A549 (cell line): ENCODE measurements at regions of chr15 and their contacts with region 1.

Region 1: DNA sequence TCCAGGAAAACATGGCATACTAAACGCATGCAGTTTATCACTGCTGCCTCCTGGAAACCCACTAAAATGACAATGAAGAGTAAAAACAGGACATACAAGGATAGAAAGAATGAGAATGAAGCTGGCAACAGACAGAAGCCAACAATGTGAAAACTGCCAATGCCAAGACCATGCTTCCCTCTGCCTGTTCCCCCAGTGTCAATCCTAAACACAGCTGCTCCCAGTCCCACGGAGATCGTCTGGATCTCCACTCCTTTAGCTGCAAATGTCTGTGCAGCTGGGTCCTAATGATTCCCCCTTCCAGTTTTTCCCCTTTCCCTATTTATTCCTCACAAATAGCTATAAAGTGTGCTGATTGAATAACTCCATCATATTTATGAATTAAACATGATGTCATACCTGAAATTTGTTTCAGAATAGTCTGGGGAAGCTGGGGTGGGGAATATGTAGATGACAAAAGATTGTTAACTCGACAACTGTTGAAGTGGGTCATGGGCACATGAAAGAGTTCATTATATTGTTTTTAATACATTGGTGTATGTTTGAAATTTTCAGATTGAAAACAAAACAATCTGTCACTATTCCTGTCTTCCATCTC is 16.0 kb downstream of the LEO1 start:
- DNase-seq: no peak
- ATAC-seq: no peak; a peak in 1 of 6 replicates
- H3K4me3 ChIP-seq: no peak overlapping the region
- H3K27ac ChIP-seq: no peak overlapping the region
- H3K4me1 ChIP-seq: peaks cover 7% of the 10 kb centered on the region
- CTCF ChIP-seq: no peak
- EP300 ChIP-seq: no peak
- POLR2A ChIP-seq: no peak
- RAD21 ChIP-seq: no peak

Region 2: GRCh38 chr15:51966192-51966591 is 10.6 kb after region 1 on chr15:
- CTCF ChIA-PET with region 1: interaction called, 10 read pairs
- POLR2A ChIA-PET with region 1: interaction called, 4 read pairs
- DNase-seq: no peak
- ATAC-seq: no peak
- H3K4me3 ChIP-seq: no peak overlapping the region
- H3K27ac ChIP-seq: no peak overlapping the region
- H3K4me1 ChIP-seq: peaks cover 13% of the 10 kb centered on the region
- CTCF ChIP-seq: no peak
- EP300 ChIP-seq: no peak
- POLR2A ChIP-seq: no peak
- RAD21 ChIP-seq: no peak

Region 3: GRCh38 chr15:52031566-52031965 is 76.0 kb after region 1 on chr15:
- CTCF ChIA-PET with region 1: no interaction called
- POLR2A ChIA-PET with region 1: no interaction called
- DNase-seq: peak in 1 of 2 experiments; percentile 61
- ATAC-seq: peak; percentile 48 to 65; a peak in 2 of 6 replicates
- H3K4me3 ChIP-seq: no peak overlapping the region
- H3K27ac ChIP-seq: no peak overlapping the region
- H3K4me1 ChIP-seq: peaks cover 32% of the 10 kb centered on the region
- CTCF ChIP-seq: no peak
- EP300 ChIP-seq: no peak
- POLR2A ChIP-seq: no peak
- RAD21 ChIP-seq: no peak